Left cardiac atrium (tissue), 4 donors: ENCODE measurements at regions of chr3 and their contacts with region 1.

Region 1: DNA sequence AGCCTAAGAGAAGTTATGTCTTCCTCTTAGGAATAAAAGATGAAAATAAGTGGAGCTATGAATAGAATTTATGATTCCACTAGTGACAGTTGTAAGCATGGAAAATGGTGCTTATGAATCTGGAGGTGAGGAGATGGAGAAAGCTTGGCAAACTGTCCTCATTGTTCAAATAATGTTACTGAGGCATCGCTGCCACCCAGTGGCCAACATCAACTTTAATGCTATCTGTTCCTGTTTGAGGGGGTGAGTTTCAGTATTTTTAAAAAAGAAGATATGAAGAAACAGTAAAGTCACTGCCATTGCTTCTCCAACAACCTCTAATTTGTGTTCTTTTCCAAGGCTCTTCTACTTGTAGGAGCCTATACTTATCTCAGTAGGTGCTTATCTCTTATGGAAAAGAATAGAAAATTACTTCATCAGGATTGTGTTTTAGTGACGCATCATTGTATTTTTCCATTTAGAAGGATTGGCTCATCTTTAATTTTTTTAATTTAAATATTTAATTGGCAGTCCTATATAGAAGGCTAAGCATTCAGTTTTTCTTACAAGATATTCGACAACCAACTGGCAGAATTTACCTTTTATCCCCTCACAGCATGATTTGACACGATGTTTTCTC is 260.4 kb upstream of the P2RY1 start:
- DNase-seq: peak; percentile 63
- ATAC-seq: peak; percentile 68 to 78

Region 2: GRCh38 chr3:152222327-152222726 is 352.2 kb before region 1 on chr3:
- intact Hi-C with region 1: no loop called
- DNase-seq: no peak
- ATAC-seq: peak; percentile 82 to 85

Region 3: GRCh38 chr3:152508705-152509104 is 65.9 kb before region 1 on chr3:
- intact Hi-C with region 1: loop called (anchors 2 to 10 kb)
- DNase-seq: no peak
- ATAC-seq: no peak